ENCODE measurements at regions of chr10 and their contacts with region 1.

Region 1: DNA sequence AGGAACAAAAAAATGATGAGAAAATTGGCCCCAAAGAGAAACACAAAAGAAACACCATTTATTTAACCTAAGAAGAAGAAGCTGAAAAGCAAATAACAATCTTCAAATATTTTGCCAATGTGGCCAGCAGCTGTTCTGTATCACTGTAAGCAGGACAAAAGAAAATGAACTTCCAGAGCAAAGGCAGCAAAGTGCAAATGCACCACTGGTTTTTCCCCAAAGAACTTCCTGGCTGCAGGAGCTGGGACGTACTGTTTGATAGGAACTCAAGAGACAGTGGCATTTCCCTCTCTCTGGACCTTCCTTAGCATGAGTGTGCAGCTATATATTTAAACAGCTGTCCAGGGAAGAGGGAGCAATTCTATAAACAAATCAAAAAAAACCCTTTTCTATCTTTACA is 60.4 kb downstream of the RNLS start:
- DNase-seq: no peak
- H3K4me3 Mint-ChIP-seq: no peak overlapping the region
- H3K27ac Mint-ChIP-seq: no peak overlapping the region
- H3K4me1 Mint-ChIP-seq: no peaks in the 10 kb centered on the region
- H3K27me3 Mint-ChIP-seq: peaks cover 4% of the 10 kb centered on the region

Region 2: GRCh38 chr10:87991946-87992345 is 530.8 kb before region 1 on chr10:
- CTCF ChIA-PET with region 1: no interaction called
- intact Hi-C with region 1: no loop called
- DNase-seq: no peak
- H3K4me3 Mint-ChIP-seq: no peak overlapping the region
- H3K27ac Mint-ChIP-seq: no peak overlapping the region
- H3K4me1 Mint-ChIP-seq: peaks cover 13% of the 10 kb centered on the region
- H3K27me3 Mint-ChIP-seq: no peaks in the 10 kb centered on the region

Region 3: DNA sequence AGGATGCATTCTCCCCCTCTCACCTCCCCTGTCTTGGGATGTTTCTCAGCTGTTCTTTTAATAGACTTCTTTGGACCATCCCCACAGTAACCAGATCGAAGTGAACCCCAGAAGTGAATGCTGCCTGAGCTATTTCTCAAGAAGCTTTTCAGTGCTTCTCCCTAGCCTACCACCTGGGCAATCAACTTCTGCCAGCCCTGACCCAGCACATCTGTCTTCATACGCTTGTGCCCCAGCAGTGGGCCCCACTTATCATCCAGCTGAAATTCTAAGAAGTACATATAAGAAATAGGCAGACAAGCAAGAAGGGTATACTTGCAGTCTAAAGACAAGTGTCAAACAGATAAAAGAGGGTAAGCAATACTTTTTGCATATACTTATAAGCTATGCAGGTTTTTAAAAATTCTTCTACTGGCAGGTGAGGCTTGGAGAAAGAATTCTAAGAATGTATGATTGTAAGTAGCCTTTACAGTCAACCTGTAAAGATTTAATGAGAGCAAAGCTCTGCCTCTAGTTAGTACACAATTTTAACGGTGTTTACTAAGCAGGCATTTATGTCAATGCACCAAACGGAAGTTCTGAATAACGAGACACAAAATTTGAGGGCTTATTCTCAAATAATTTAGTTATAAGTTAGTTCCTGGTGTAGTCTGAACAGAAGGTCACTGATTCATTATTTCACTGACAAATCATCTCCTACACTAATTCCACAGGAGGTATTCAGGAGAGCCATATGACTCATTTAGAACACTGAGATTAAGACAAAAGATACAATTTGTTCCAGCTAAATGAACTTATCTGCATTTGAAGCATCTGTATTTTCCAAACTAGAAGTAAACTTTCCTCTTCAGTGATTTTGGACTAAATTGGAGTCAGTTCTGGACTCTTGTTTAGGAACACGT is 22.9 kb before region 1 on chr10:
- CTCF ChIA-PET with region 1: no interaction called
- intact Hi-C with region 1: loop called (anchors 2 kb)
- DNase-seq: no peak
- H3K4me3 Mint-ChIP-seq: no peak overlapping the region
- H3K27ac Mint-ChIP-seq: no peak overlapping the region
- H3K4me1 Mint-ChIP-seq: peaks cover 6% of the 10 kb centered on the region
- H3K27me3 Mint-ChIP-seq: peaks cover 1% of the 10 kb centered on the region

Region 4: GRCh38 chr10:88913127-88913526 is 390.4 kb after region 1 on chr10:
- CTCF ChIA-PET with region 1: no interaction called
- intact Hi-C with region 1: no loop called
- DNase-seq: no peak
- H3K4me3 Mint-ChIP-seq: no peak overlapping the region
- H3K27ac Mint-ChIP-seq: no peak overlapping the region
- H3K4me1 Mint-ChIP-seq: peaks cover 20% of the 10 kb centered on the region
- H3K27me3 Mint-ChIP-seq: no peaks in the 10 kb centered on the region

Measured in activated naive CD4-positive, alpha-beta T cell treated with anti-CD3 and anti-CD28 coated beads for 36 hours (primary cell).